Activated T-helper 2 cell treated with anti-CD3 and anti-CD28 coated beads, Interferon-gamma antibody, Interleukin-2, Interleukin-4, amounts not matched to agents 10 μg/mL and 5 μg/mL and 100 μg/mL, durations not matched to agents 14 hours and 24 hours and 36 hours (primary cell): ENCODE measurements at regions of chr1 and their contacts with region 1.

Region 1: GRCh38 chr1:212683357-212683722 is 16.3 kb downstream of the BATF3 start:
- DNase-seq: no peak
- H3K4me3 Mint-ChIP-seq: peak overlapping the region; percentile 41
- H3K27ac Mint-ChIP-seq: peak overlapping the region; percentile 88
- H3K4me1 Mint-ChIP-seq: peaks cover 62% of the 10 kb centered on the region
- H3K27me3 Mint-ChIP-seq: no peaks in the 10 kb centered on the region

Region 2: GRCh38 chr1:212665241-212666115 is 17.9 kb before region 1 on chr1:
- intact Hi-C with region 1: loop called (anchors 1 kb)
- DNase-seq: peak; percentile 73
- H3K4me3 Mint-ChIP-seq: peak overlapping the region; percentile 82
- H3K27ac Mint-ChIP-seq: peak overlapping the region; percentile 73
- H3K4me1 Mint-ChIP-seq: peaks cover 42% of the 10 kb centered on the region
- H3K27me3 Mint-ChIP-seq: peaks cover 16% of the 10 kb centered on the region

Region 3: GRCh38 chr1:212712451-212713303 is 29.3 kb after region 1 on chr1:
- intact Hi-C with region 1: loop called (anchors 1 kb)
- DNase-seq: no peak
- H3K4me3 Mint-ChIP-seq: peak overlapping the region; percentile 27
- H3K27ac Mint-ChIP-seq: peak overlapping the region; percentile 91
- H3K4me1 Mint-ChIP-seq: peaks cover 44% of the 10 kb centered on the region
- H3K27me3 Mint-ChIP-seq: no peaks in the 10 kb centered on the region